Posterior vena cava (tissue), 2 donors: ENCODE measurements at regions of chr19 and their contacts with region 1.

Region 1: DNA sequence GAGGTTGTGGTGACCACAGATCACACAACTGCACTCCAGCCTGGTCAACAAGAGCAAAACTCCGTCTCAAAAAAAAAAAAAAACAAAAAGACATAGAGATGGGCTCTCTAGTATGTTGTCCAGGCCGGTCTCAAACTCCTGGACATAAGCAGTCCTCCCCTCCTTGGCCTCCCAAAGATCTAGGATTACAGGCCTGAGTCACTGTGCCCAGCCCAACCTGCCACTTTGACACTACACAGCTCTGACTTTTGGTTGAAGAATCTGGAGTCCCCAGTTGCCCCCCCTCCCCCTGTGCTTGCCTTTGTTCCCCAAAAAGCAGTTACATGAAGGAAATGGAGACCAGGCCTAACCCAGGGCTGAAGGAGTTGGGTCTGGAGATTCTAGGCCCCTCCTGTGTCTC is 12.9 kb downstream of the CARM1 start:
- DNase-seq: no peak

Region 2: DNA sequence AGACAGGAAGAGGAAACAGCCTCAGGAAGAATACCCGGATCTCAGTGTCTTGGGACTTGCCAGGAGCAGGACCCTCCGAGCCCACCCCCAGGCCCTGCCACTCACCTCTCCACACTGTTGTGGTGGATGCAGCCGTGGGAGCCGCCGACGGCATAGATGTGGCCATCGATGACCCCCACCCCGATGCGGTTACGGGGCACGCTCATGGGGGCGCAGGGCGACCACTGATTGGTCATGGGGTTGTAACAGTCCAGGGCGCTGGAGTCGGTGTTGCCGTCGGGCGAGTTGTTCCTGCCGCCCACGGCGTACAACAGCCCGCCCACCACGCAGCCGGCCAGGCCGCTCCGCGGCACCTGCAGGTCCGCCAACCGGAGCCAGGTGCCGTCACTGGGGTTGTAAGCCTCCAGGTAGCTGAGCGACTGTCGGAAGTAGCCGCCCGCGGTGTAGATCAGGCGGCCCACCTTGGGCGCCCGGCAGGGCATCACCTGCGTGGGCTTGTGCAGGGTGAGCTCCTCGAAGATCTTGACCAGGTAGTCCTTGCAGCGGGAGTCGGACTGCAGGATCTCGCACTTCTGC is 392.7 kb before region 1 on chr19:
- intact Hi-C with region 1: no loop called
- DNase-seq: no peak

Region 3: DNA sequence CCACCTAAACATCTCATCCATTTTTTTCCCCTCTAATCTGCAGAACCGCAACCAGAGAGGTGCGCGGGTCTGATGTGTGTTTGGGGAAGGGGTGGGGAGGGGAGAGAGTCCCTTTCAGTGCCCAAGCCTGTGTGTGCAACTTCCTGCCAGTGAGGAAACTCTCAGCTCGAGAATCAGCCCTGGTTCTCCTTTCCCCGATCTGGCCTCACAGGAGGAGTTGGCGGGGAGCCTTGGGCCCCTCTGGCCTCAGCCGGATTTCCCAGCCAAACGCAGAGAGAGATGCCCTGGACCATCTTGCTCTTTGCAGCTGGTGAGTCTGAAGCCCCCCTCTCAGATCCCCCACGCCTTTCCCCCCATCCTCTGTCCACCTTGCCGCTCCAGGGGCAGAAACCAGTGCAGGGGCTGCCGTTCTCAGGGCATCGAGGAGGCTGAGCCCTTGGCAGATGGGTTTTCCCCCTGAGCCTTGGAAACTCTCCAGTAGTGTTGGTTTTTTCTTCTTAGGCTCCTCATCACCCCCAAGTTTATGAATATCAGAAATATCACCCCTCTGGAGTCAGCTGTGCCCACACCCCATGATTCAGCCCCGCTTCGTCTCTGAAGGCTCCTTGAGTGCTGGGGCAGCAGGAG is 35.9 kb before region 1 on chr19 and contains the start of gene C19orf38:
- intact Hi-C with region 1: no loop called
- DNase-seq: no peak
- total RNA-seq, gene C19orf38: 2.0 to 2.3 TPM

Region 4: GRCh38 chr19:10915130-10916091 is 31.1 kb after region 1 on chr19:
- intact Hi-C with region 1: loop called in 1 of 2 experiments (anchors 5 kb)
- DNase-seq: peak; percentile 80